A549 (cell line): ENCODE measurements at regions of chr2 and their contacts with region 1.

Region 1: DNA sequence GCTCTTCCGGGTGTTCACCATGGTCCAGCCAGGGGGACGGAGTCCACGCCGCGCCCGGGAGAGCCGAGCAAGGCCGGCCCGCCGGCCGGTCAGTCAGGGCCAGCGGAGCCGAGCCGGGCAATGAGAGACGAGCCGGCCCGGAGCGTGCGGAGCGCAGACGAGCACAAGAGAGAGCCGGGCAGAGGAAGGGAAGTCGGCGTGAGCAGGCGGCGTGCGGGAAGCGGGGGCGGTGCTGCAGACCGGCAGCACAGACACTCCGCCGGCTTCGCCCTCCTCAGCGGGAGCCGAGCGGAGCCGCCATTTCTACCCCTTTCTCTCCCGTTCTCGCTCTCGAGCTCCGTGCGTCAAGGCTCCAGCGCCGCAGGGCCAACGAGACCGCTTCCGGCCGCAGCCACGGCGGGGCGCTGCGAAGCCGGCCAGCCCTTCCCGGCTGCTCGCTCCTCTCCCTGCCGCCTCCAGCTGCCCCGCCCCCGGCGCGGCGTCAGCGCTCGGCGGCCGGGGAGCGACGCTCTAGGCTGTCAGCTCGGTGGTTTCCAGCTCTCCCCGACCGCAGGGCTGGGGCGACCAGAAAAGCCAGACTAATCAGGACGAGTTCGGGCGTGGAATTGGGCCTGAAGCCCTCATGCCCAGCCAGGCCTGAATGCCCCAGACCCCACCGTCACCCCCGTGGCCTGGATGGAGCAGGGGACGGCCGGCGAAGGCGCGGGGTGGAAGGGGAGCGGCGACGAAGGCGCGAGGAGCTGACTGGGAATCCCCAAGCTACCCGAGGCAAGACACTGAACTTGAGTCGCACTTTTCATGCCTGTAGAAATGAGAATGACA is at the start of gene ATAD2B:
- DNase-seq: peak; percentile 90 to 97
- ATAC-seq: peak; percentile 89 to 96
- H3K4me3 ChIP-seq: peak within 1 kb of the TSS; percentile 75
- H3K27ac ChIP-seq: peak within 1 kb of the TSS; percentile 93 to 95
- H3K4me1 ChIP-seq: peaks cover 20% of the 10 kb centered on the region; the same call in 2 of the 3 replicates
- CTCF ChIP-seq: peak; percentile 96
- EP300 ChIP-seq: no peak
- POLR2A ChIP-seq: peak; percentile 80
- RAD21 ChIP-seq: peak; percentile 77 to 93
- polyA plus RNA-seq, gene ATAD2B: 8.7 and 13.1 TPM in 2 replicates

Region 2: DNA sequence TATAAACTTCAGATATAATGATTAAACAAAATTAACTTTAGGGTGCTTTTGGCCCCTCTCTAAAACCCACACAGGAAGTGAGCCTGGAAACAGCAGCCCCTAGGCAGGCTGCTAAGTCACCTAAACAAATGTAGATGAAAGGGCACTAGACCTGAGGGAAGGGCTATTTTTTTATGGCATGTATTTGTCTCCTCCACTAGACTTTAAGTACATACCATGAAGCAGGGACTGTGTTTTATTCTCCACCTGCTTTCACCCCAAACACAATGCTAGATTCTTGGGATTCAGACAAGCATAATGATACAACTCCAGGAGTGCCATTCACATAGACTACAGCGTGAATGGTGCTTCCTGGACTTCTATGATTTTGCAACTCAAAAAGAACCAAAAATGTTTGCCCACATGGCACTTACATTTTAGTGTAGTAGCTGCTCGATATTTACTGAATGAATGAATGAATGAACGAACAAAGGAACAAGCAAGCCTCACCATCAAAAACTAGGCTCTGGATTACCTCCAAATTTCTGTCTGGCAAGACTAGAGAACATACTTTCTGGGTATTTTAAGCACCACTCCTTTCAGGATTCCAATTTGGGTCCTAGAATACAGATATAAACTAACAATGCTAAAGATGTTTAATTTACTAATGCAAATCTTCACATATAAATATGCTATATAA is 10.1 kb before region 1 on chr2:
- CTCF ChIA-PET with region 1: interaction called, 19 read pairs
- POLR2A ChIA-PET with region 1: no interaction called
- DNase-seq: no peak
- ATAC-seq: peak; percentile 42 to 68; a peak in 3 of 6 replicates
- H3K4me3 ChIP-seq: no peak overlapping the region
- H3K27ac ChIP-seq: 0 out of 6 replicates have a peak overlapping the region, but pooled peaks of 1 of the 2 experiments have one; percentile 22
- H3K4me1 ChIP-seq: peaks cover 18% of the 10 kb centered on the region
- CTCF ChIP-seq: no peak
- EP300 ChIP-seq: no peak
- POLR2A ChIP-seq: no peak
- RAD21 ChIP-seq: no peak

Region 3: GRCh38 chr2:24009680-24010476 is 82.9 kb after region 1 on chr2 and contains the start of gene MFSD2B:
- CTCF ChIA-PET with region 1: interaction called, 16 read pairs
- POLR2A ChIA-PET with region 1: interaction called, 19 read pairs
- DNase-seq: no peak
- ATAC-seq: 0 out of 6 replicates have a peak, but pooled peaks of 1 of the 2 experiments have one; percentile 2
- H3K4me3 ChIP-seq: no peak within 1 kb of the TSS
- H3K27ac ChIP-seq: peak within 1 kb of the TSS; percentile 48 to 72
- H3K4me1 ChIP-seq: peaks cover 48% of the 10 kb centered on the region
- CTCF ChIP-seq: no peak
- EP300 ChIP-seq: no peak
- POLR2A ChIP-seq: no peak
- RAD21 ChIP-seq: no peak
- polyA plus RNA-seq, gene MFSD2B: 0.09 and 0.15 TPM in 2 replicates

Region 4: DNA sequence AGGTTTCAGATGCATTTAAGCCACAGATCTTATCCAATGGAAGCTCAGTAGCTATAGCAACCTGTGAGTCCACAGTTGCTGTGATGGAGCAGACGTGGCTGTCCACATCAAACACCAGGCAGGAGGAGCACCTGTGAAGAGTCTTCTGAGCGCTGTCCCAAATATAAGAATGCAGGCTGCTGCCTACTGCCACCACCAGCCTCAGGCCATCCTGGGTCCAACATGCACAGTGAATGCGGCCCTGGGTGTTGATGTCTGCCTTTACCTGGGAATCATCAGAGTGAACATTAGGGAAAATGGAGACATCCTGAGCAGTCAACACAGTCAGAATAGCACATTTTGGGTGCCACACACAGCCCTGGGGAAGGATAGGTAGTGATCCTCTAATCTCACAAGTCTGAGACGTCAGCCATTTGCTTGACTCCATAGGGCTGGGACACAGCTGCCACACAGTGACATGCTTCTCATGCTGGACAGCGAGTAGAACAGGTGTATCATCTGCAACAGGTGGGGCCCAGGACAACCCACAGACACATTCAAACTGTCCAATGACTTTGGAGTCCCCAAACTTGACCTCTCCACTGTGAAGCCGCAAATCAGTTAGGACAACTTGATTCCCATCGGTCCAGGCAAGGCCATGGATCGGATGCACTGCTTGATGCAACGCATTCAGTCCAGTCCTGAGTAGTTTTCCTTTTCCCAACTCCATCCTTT is 112.0 kb after region 1 on chr2:
- CTCF ChIA-PET with region 1: interaction called, 10 read pairs
- POLR2A ChIA-PET with region 1: no interaction called
- DNase-seq: no peak
- ATAC-seq: peak; percentile 23 to 64; a peak in 2 of 6 replicates
- H3K4me3 ChIP-seq: no peak overlapping the region
- H3K27ac ChIP-seq: no peak overlapping the region
- H3K4me1 ChIP-seq: 0 out of 3 replicates have a peak, but pooled peaks cover 2% of the 10 kb centered on the region
- CTCF ChIP-seq: no peak
- EP300 ChIP-seq: no peak
- POLR2A ChIP-seq: no peak
- RAD21 ChIP-seq: no peak

Region 5: DNA sequence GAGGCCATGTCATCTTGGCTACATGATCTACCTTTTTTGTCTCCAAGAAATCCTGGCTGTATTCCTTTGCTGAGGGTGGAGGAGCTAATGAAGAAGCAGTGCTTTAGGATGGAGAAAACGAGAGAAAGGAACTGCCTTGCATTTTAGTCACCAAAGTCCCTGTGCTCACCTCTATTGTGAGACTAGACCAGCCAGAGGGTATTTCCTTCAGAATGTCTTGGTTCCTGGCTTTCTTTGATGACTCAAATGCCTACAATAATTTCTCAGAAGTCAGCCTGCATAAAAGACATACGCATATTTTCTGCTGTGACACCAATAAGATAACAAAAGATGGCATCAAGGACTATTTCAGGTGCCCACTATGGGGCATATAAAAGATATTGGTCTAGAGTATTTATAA is 138.4 kb after region 1 on chr2:
- CTCF ChIA-PET with region 1: interaction called, 25 read pairs
- POLR2A ChIA-PET with region 1: no interaction called
- DNase-seq: no peak
- ATAC-seq: no peak
- H3K4me3 ChIP-seq: no peak overlapping the region
- H3K27ac ChIP-seq: no peak overlapping the region
- H3K4me1 ChIP-seq: no peaks in the 10 kb centered on the region
- CTCF ChIP-seq: no peak
- EP300 ChIP-seq: no peak
- POLR2A ChIP-seq: no peak
- RAD21 ChIP-seq: no peak

Region 6: DNA sequence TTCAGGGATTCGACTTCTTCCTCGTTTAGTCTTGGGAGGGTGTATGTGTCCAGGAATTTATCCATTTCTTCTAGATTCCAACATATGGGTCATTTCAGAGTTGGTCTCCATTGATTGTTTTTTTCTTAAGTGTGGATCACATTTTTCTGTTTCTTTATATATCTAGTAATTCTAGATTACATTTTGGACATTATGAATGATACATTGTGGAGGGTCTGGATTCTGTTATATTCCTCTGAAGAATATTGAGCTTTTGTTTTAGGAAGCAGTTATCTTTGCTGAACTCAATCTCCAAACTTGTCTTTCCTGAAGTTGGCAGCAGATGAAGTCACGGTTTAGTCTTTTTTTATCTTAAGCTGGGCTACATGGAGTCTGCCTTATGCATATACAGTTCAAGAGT is 205.6 kb after region 1 on chr2:
- CTCF ChIA-PET with region 1: no interaction called
- POLR2A ChIA-PET with region 1: no interaction called
- DNase-seq: no peak
- ATAC-seq: no peak
- H3K4me3 ChIP-seq: no peak overlapping the region
- H3K27ac ChIP-seq: no peak overlapping the region
- H3K4me1 ChIP-seq: no peaks in the 10 kb centered on the region
- CTCF ChIP-seq: no peak
- EP300 ChIP-seq: no peak
- POLR2A ChIP-seq: no peak
- RAD21 ChIP-seq: no peak